B cell (primary cell): ENCODE measurements at regions of chr10 and their contacts with region 1.

Region 1: GRCh38 chr10:75772153-75772887 is 340.9 kb downstream of the LRMDA start:
- DNase-seq: peak; percentile 12
- ATAC-seq: no peak
- H3K4me3 ChIP-seq: peak overlapping the region; percentile 17 to 62 (median 42)
- H3K4me3 Mint-ChIP-seq: peak overlapping the region; percentile 81
- H3K27ac ChIP-seq: no peak overlapping the region
- H3K27ac Mint-ChIP-seq: no peak overlapping the region
- H3K4me1 ChIP-seq: no peaks in the 10 kb centered on the region
- H3K4me1 Mint-ChIP-seq: peaks cover 13% of the 10 kb centered on the region
- H3K27me3 ChIP-seq: no peaks in the 10 kb centered on the region
- H3K27me3 Mint-ChIP-seq: peaks cover 11% of the 10 kb centered on the region
- CTCF ChIP-seq: no peak

Region 2: DNA sequence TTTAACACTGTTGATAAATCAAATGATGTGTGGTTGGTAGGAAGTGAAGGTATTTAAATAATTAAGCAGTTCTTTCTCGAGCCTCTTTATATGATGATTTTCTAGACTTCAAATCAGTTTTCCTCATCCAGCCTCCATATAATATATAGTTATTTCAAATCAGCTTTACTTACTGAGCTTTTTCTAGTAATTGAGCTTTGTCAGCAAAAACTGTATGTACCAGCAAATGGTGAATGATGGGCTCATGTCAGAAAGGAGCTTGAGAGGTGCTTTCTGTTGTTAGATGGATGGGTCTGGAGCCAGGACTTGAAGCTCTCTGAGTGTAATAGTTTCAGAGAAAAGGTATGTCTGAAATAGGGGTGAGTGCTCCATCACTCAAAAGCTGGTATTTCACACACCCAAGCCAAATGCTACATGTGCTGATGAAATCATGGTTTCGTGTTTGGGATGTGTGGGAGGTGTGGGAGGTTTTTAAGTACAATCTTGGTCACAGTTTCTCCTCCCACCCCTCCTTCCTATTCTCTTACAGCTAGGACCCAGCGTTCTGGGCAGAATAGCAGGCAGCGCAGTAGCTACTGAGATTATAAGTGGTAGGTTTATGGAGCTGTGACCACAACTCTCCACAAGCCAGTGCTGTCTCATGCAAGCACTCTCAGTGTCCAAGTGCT is 285.1 kb before region 1 on chr10:
- CTCF ChIA-PET with region 1: no interaction called
- POLR2A ChIA-PET with region 1: no interaction called
- intact Hi-C with region 1: no loop called
- DNase-seq: no peak
- ATAC-seq: no peak
- H3K4me3 ChIP-seq: no peak overlapping the region
- H3K4me3 Mint-ChIP-seq: no peak overlapping the region
- H3K27ac ChIP-seq: no peak overlapping the region
- H3K27ac Mint-ChIP-seq: no peak overlapping the region
- H3K4me1 ChIP-seq: no peaks in the 10 kb centered on the region
- H3K4me1 Mint-ChIP-seq: no peaks in the 10 kb centered on the region
- H3K27me3 ChIP-seq: no peaks in the 10 kb centered on the region
- H3K27me3 Mint-ChIP-seq: no peaks in the 10 kb centered on the region
- CTCF ChIP-seq: no peak

Region 3: GRCh38 chr10:75838486-75838885 is 66.2 kb after region 1 on chr10:
- CTCF ChIA-PET with region 1: no interaction called
- POLR2A ChIA-PET with region 1: no interaction called
- intact Hi-C with region 1: loop called (anchors 10 kb)
- DNase-seq: no peak
- ATAC-seq: no peak
- H3K4me3 ChIP-seq: no peak overlapping the region
- H3K4me3 Mint-ChIP-seq: no peak overlapping the region
- H3K27ac ChIP-seq: no peak overlapping the region
- H3K27ac Mint-ChIP-seq: no peak overlapping the region
- H3K4me1 ChIP-seq: no peaks in the 10 kb centered on the region
- H3K4me1 Mint-ChIP-seq: no peaks in the 10 kb centered on the region
- H3K27me3 ChIP-seq: peaks cover 0 to 4% (median 0%) of the 10 kb centered on the region in 4 experiments
- H3K27me3 Mint-ChIP-seq: peaks cover 10% of the 10 kb centered on the region
- CTCF ChIP-seq: no peak